Right ventricle myocardium inferior (tissue), 1 donor: ENCODE measurements at regions of chr2 and their contacts with region 1.

Region 1: DNA sequence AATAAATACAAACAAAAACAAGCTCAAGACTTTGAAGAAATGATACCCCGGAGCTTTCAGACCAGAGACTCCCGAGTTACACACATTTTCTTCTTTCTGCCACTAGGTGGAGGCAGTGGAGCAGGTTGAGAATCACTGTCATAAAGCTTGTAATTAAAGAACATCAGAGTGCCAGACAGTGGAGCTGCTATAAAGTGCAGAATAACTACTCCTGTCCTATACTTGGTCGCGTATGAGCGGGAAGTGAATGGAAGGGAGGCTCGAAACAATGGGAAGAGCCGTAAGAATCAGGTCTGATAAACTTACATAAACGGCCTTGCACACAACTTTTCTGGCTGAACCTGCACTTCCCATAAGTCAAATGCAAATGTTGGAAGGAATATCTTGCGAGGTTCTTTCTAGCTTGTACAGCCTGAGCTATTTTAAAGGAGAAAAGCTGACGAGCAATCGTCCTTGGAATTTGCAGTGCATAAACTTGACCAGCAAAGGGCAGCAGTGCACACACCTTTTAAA is 189.0 kb downstream of the RPIA start:
- DNase-seq: no peak
- ATAC-seq: peak; percentile 85

Region 2: GRCh38 chr2:88627056-88627855 is 253.2 kb before region 1 on chr2 and contains the start of gene EIF2AK3:
- intact Hi-C with region 1: no loop called
- DNase-seq: peak; percentile 98
- ATAC-seq: peak; percentile 96
- total RNA-seq, gene EIF2AK3: 4.3 TPM

Region 3: GRCh38 chr2:88753833-88754584 is 126.5 kb before region 1 on chr2:
- intact Hi-C with region 1: no loop called
- DNase-seq: no peak
- ATAC-seq: no peak

Region 4: GRCh38 chr2:88810017-88810416 is 70.5 kb before region 1 on chr2:
- intact Hi-C with region 1: no loop called
- DNase-seq: no peak
- ATAC-seq: no peak

Region 5: GRCh38 chr2:88845772-88846661 is 34.5 kb before region 1 on chr2:
- intact Hi-C with region 1: no loop called
- DNase-seq: no peak
- ATAC-seq: no peak

Region 6: GRCh38 chr2:88933980-88934379 is 53.5 kb after region 1 on chr2:
- intact Hi-C with region 1: loop called (anchors 5 kb)
- DNase-seq: no peak
- ATAC-seq: no peak